Activated CD4-positive, alpha-beta T cell treated with anti-CD3 and anti-CD28 coated beads, Interleukin-2, amount 10 ng/mL, durations not matched to agents 24 days and 14 days (primary cell): ENCODE measurements at regions of chr19 and their contacts with region 1.

Region 1: GRCh38 chr19:16338470-16339360 is 14.1 kb downstream of the KLF2 start:
- DNase-seq: peak; percentile 90
- H3K4me3 Mint-ChIP-seq: peak overlapping the region; percentile 75
- H3K27ac Mint-ChIP-seq: peak overlapping the region; percentile 74
- H3K4me1 Mint-ChIP-seq: peaks cover 54% of the 10 kb centered on the region
- H3K27me3 Mint-ChIP-seq: peaks cover 10% of the 10 kb centered on the region

Region 2: GRCh38 chr19:15810335-15810734 is 528.4 kb before region 1 on chr19:
- intact Hi-C with region 1: no loop called
- DNase-seq: no peak
- H3K4me3 Mint-ChIP-seq: no peak overlapping the region
- H3K27ac Mint-ChIP-seq: no peak overlapping the region
- H3K4me1 Mint-ChIP-seq: no peaks in the 10 kb centered on the region
- H3K27me3 Mint-ChIP-seq: peaks cover 25% of the 10 kb centered on the region

Region 3: GRCh38 chr19:16197622-16198369 is 140.9 kb before region 1 on chr19 and contains the start of gene AP1M1:
- intact Hi-C with region 1: no loop called
- DNase-seq: peak; percentile 100
- H3K4me3 Mint-ChIP-seq: peak within 1 kb of the TSS; percentile 93
- H3K27ac Mint-ChIP-seq: peak within 1 kb of the TSS; percentile 92
- H3K4me1 Mint-ChIP-seq: peaks cover 39% of the 10 kb centered on the region
- H3K27me3 Mint-ChIP-seq: no peaks in the 10 kb centered on the region
- total RNA-seq, gene AP1M1: 107 and 111 TPM in 2 replicates

Region 4: DNA sequence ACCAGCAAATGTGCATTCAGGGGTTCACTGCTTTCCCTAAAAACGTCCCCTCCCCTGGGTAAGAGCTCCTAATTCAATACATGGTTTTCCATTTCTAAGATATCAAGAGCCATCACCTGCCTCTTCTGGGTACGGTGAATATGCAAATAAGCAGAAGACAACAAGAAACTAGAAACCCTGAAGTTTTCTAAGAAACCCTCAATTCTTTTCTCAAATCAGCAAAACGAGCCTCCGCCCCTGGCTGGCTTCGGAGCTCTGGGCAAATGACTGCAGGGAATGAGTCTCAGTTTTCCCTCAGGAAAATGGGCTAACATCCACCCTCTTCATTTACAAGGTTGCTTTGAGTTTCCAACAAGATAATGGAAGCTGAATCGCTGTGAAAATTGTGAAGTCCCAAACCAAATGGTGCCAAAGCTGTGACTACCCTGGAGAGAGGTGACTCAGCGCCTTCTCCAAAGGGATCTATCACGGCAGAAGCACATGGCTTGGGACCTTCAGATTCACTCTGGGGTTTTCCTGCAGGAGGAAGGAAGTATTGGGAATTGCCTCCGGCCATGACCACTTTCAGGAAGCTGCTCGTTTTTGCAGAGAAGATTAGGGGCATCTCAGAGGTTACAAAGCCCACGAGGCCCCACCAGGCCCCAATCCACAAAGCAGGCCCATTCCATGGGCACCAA is 12.6 kb after region 1 on chr19:
- intact Hi-C with region 1: loop called (anchors 1 kb)
- DNase-seq: peak; percentile 70
- H3K4me3 Mint-ChIP-seq: peak overlapping the region; percentile 68
- H3K27ac Mint-ChIP-seq: peak overlapping the region; percentile 28
- H3K4me1 Mint-ChIP-seq: peaks cover 36% of the 10 kb centered on the region
- H3K27me3 Mint-ChIP-seq: peaks cover 14% of the 10 kb centered on the region

Region 5: DNA sequence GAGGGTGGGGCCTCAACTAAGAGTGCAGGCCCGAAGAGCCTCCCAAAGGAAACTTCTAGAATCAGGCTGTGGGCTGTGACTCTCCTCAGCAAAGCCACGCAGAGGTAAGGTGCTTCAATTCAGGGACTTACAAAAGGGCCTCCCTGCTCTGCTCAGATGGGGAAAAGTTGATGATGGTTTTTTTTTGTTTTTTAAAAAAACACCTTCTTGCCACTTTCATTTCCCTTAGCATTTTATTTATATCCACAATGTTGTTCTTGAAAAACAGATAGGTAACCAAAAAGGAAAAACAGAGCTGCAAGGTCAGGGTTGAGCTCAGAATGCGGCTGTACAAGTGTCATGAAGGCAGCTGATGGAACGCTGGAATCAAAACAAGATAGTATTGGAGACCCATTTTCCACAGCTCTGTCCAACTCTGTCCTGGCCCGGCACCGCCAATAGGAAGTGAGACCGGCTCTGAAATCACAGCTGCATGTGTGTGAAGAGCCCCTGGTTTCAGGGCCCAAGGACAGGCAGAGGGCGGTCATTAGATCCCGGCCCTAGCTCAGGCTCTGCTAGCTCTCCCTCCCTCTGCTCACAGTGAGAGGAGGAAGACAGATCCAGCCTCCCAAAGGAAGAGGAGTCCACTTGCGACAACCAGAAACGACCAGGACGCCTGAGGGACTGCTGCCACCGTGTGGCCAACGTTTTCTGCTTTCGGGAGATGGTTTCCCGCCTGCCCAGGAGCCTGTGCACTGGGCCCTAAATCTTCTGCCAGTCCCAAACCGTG is 44.2 kb after region 1 on chr19:
- intact Hi-C with region 1: no loop called
- DNase-seq: peak; percentile 92
- H3K4me3 Mint-ChIP-seq: peak overlapping the region; percentile 53
- H3K27ac Mint-ChIP-seq: peak overlapping the region; percentile 15
- H3K4me1 Mint-ChIP-seq: peaks cover 38% of the 10 kb centered on the region
- H3K27me3 Mint-ChIP-seq: no peaks in the 10 kb centered on the region